ENCODE measurements at regions of chr3 and their contacts with region 1.

Region 1: DNA sequence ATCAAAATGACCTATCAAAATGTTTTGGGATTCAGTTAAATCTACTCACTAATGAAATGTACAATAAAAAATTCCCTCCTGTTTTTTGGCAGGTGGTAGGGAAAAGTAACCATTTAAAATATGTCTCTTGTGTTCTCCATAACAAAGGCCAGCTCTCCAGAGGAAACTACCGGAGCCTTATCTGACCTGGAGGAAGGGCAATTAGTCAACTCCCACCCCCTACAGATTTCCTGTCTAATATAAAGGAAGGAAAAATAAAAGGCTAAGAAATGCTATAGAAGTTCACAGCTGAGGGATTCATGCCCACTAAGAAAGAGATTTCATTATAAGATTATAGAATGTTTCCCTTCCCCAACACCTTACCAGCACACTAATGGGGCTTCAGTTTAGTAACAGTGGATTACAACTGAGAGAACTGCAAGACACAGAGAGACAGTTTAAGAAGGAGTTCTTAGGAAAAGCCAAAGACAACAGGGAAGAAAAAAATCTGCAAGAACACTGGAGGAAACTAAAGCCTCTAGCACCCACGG is 376.5 kb upstream of the KCNMB2 start:
- DNase-seq: no peak
- H3K4me3 ChIP-seq: no peak overlapping the region
- H3K27ac ChIP-seq: no peak overlapping the region
- H3K4me1 ChIP-seq: no peaks in the 10 kb centered on the region
- H3K27me3 ChIP-seq: no peaks in the 10 kb centered on the region
- CTCF ChIP-seq: no peak
- EP300 ChIP-seq: no peak
- POLR2A ChIP-seq: no peak

Region 2: GRCh38 chr3:176953106-176954060 is 1206.4 kb before region 1 on chr3:
- intact Hi-C with region 1: loop called (anchors 10 kb)
- DNase-seq: peak; percentile 86
- H3K4me3 ChIP-seq: no peak overlapping the region
- H3K27ac ChIP-seq: peak overlapping the region in 3 of 4 donors; percentile 48 to 60 (median 54)
- H3K4me1 ChIP-seq: peaks cover 0 to 20% (median 16%) of the 10 kb centered on the region in 4 donors
- H3K27me3 ChIP-seq: no peaks in the 10 kb centered on the region
- CTCF ChIP-seq: no peak
- EP300 ChIP-seq: peak in 2 of 4 donors; percentile 34 to 48
- POLR2A ChIP-seq: no peak

Region 3: GRCh38 chr3:177977381-177978158 is 182.2 kb before region 1 on chr3:
- intact Hi-C with region 1: no loop called
- DNase-seq: no peak
- H3K4me3 ChIP-seq: no peak overlapping the region
- H3K27ac ChIP-seq: no peak overlapping the region
- H3K4me1 ChIP-seq: peaks cover 0 to 10% (median 0%) of the 10 kb centered on the region in 4 donors
- H3K27me3 ChIP-seq: no peaks in the 10 kb centered on the region
- CTCF ChIP-seq: no peak
- EP300 ChIP-seq: no peak
- POLR2A ChIP-seq: no peak